Mammary epithelial cell (primary cell): ENCODE measurements at regions of chr22 and their contacts with region 1.

Region 1: GRCh38 chr22:17171313-17172171 is 12.5 kb upstream of the HDHD5 start:
- DNase-seq: peak; percentile 75
- H3K4me3 ChIP-seq: peak overlapping the region; percentile 35 to 91 (median 54)
- H3K27ac ChIP-seq: no peak overlapping the region
- H3K4me1 ChIP-seq: peaks cover 4% of the 10 kb centered on the region
- H3K27me3 ChIP-seq: no peaks in the 10 kb centered on the region
- CTCF ChIP-seq: peak; percentile 79 to 91

Region 2: GRCh38 chr22:16917144-16918003 is 254.2 kb before region 1 on chr22:
- CTCF ChIA-PET with region 1: no interaction called
- dilution Hi-C with region 1: no loop called
- in situ Hi-C with region 1: loop called in 1 of 2 experiments (anchors 25 kb)
- intact Hi-C with region 1: loop called (anchors 5 kb)
- DNase-seq: peak; percentile 31
- H3K4me3 ChIP-seq: no peak overlapping the region
- H3K27ac ChIP-seq: no peak overlapping the region
- H3K4me1 ChIP-seq: no peaks in the 10 kb centered on the region
- H3K27me3 ChIP-seq: no peaks in the 10 kb centered on the region
- CTCF ChIP-seq: peak; percentile 55 to 70

Region 3: GRCh38 chr22:17121227-17122195 is 50.0 kb before region 1 on chr22 and contains the start of gene TMEM121B:
- CTCF ChIA-PET with region 1: interaction called, 4 read pairs
- dilution Hi-C with region 1: no loop called
- in situ Hi-C with region 1: no loop called
- intact Hi-C with region 1: loop called (anchors 5 kb)
- DNase-seq: peak; percentile 44
- H3K4me3 ChIP-seq: peak within 1 kb of the TSS; percentile 22 to 45 (median 33)
- H3K27ac ChIP-seq: no peak within 1 kb of the TSS
- H3K4me1 ChIP-seq: peaks cover 5% of the 10 kb centered on the region
- H3K27me3 ChIP-seq: peaks cover 14% of the 10 kb centered on the region
- CTCF ChIP-seq: no peak
- total RNA-seq, gene TMEM121B: 0.17 to 0.24 TPM

Region 4: DNA sequence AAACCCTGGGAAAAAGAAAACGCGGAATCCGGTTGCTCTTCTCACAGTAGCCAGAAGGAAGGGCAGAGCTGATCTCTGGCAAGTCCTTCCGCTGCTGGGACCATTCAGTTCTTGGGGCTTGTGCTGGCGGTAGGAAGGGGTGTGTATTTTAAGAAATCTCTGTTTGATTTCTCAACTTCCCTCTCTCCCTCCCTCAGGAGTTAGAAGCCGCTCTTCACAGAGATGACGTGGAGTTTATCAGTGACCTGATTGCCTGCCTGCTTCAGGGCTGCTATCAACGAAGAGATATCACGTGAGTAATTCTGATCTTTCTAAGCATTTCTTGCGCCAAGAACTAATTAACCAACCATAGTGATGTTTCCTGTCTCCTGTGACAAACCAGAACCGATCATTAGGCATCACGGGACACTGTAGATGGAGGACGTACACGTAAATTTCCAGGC is 305.9 kb after region 1 on chr22:
- CTCF ChIA-PET with region 1: no interaction called
- dilution Hi-C with region 1: no loop called
- in situ Hi-C with region 1: loop called (anchors 10 to 25 kb)
- intact Hi-C with region 1: no loop called
- DNase-seq: peak; percentile 14
- H3K4me3 ChIP-seq: peak overlapping the region; percentile 13 to 41 (median 24)
- H3K27ac ChIP-seq: no peak overlapping the region
- H3K4me1 ChIP-seq: no peaks in the 10 kb centered on the region
- H3K27me3 ChIP-seq: no peaks in the 10 kb centered on the region
- CTCF ChIP-seq: no peak

Region 5: GRCh38 chr22:17501679-17502285 is 330.2 kb after region 1 on chr22:
- CTCF ChIA-PET with region 1: interaction called, 33 read pairs
- dilution Hi-C with region 1: no loop called
- in situ Hi-C with region 1: loop called in 1 of 2 experiments (anchors 25 kb)
- intact Hi-C with region 1: loop called (anchors 1 kb)
- DNase-seq: peak; percentile 53
- H3K4me3 ChIP-seq: no peak overlapping the region
- H3K27ac ChIP-seq: no peak overlapping the region
- H3K4me1 ChIP-seq: no peaks in the 10 kb centered on the region
- H3K27me3 ChIP-seq: peaks cover 2% of the 10 kb centered on the region
- CTCF ChIP-seq: peak; percentile 49 to 67